SK-N-SH (cell line): ENCODE measurements at regions of chr9 and their contacts with region 1.

Region 1: GRCh38 chr9:84697509-84698114 is 28.1 kb downstream of the NTRK2 start:
- DNase-seq: peak; percentile 58
- H3K4me3 ChIP-seq: no peak overlapping the region
- H3K27ac ChIP-seq: no peak overlapping the region
- H3K4me1 ChIP-seq: no peaks in the 10 kb centered on the region
- H3K27me3 ChIP-seq: no peaks in the 10 kb centered on the region; the same call in 1 of the 2 replicates
- CTCF ChIP-seq: peak; percentile 68
- EP300 ChIP-seq: no peak
- RAD21 ChIP-seq: peak; percentile 74

Region 2: DNA sequence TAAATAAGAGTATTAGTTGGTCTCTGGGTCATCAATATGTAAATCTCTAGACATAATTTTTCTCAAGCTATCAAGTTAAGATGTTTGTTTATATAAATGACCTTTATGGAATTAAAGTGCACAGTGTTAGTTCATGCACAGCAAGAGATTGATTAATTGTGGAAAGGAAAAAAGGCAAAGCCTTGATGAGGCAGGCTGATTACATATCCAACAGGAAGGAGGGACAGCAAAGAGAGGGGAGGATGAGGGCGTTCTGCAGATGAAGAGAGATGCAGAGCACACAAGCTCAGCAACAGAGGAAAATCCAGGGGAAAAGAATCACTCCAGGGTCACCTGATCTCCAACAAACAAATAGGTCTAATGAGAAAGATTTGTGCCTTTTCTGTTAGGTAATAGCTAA is 11.5 kb before region 1 on chr9:
- CTCF ChIA-PET with region 1: interaction called, 10 read pairs
- POLR2A ChIA-PET with region 1: no interaction called
- DNase-seq: no peak
- H3K4me3 ChIP-seq: no peak overlapping the region
- H3K27ac ChIP-seq: no peak overlapping the region
- H3K4me1 ChIP-seq: peaks cover 0 to 3% of the 10 kb centered on the region in 2 experiments; a peak in 1 of 4 replicates
- H3K27me3 ChIP-seq: no peaks in the 10 kb centered on the region
- CTCF ChIP-seq: no peak
- EP300 ChIP-seq: no peak
- RAD21 ChIP-seq: no peak

Region 3: GRCh38 chr9:84781458-84781857 is 83.8 kb after region 1 on chr9:
- CTCF ChIA-PET with region 1: interaction called, 17 read pairs
- POLR2A ChIA-PET with region 1: no interaction called
- DNase-seq: peak; percentile 15
- H3K4me3 ChIP-seq: no peak overlapping the region; a peak in 1 of 4 replicates
- H3K27ac ChIP-seq: no peak overlapping the region
- H3K4me1 ChIP-seq: no peaks in the 10 kb centered on the region
- H3K27me3 ChIP-seq: no peaks in the 10 kb centered on the region
- CTCF ChIP-seq: peak; percentile 68
- EP300 ChIP-seq: no peak
- RAD21 ChIP-seq: peak; percentile 60

Region 4: DNA sequence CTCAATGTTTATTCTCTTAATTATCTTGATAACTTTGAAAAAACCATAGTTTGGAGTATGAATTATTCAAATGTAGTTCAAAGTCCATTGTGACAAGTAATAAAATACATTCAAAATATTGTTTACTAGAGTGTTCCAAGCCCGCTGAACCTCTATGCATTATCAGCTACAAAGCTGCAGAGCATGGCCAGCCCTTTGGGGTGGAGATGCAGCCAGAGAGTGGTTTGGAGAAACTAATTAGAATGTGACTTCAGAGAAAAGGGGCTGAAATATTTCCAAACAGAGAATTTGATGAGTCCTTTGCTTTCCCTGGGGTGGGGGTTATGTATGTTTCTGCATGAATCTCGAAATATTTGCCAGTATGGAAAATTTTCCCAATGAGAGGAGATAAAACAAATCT is 183.2 kb after region 1 on chr9:
- CTCF ChIA-PET with region 1: no interaction called
- POLR2A ChIA-PET with region 1: no interaction called
- DNase-seq: no peak
- H3K4me3 ChIP-seq: no peak overlapping the region
- H3K27ac ChIP-seq: no peak overlapping the region
- H3K4me1 ChIP-seq: no peaks in the 10 kb centered on the region
- H3K27me3 ChIP-seq: no peaks in the 10 kb centered on the region
- CTCF ChIP-seq: no peak
- EP300 ChIP-seq: no peak
- RAD21 ChIP-seq: no peak

Region 5: GRCh38 chr9:84953797-84954705 is 256.4 kb after region 1 on chr9:
- CTCF ChIA-PET with region 1: interaction called, 10 read pairs
- POLR2A ChIA-PET with region 1: no interaction called
- DNase-seq: peak; percentile 85
- H3K4me3 ChIP-seq: peak overlapping the region in 1 of 2 experiments; percentile 23; a peak in 1 of 4 replicates
- H3K27ac ChIP-seq: no peak overlapping the region
- H3K4me1 ChIP-seq: no peaks in the 10 kb centered on the region; a peak in 1 of 4 replicates
- H3K27me3 ChIP-seq: no peaks in the 10 kb centered on the region
- CTCF ChIP-seq: peak; percentile 93
- EP300 ChIP-seq: no peak
- RAD21 ChIP-seq: peak; percentile 86

Region 6: GRCh38 chr9:85258823-85259370 is 561.3 kb after region 1 on chr9:
- CTCF ChIA-PET with region 1: interaction called, 21 read pairs
- POLR2A ChIA-PET with region 1: no interaction called
- DNase-seq: peak; percentile 69
- H3K4me3 ChIP-seq: no peak overlapping the region; a peak in 1 of 4 replicates
- H3K27ac ChIP-seq: no peak overlapping the region
- H3K4me1 ChIP-seq: peaks cover 0 to 5% of the 10 kb centered on the region in 2 experiments; a peak in 2 of 4 replicates
- H3K27me3 ChIP-seq: no peaks in the 10 kb centered on the region
- CTCF ChIP-seq: peak; percentile 75
- EP300 ChIP-seq: no peak
- RAD21 ChIP-seq: peak; percentile 97